ENCODE measurements at regions of chr11 and their contacts with region 1.

Region 1: DNA sequence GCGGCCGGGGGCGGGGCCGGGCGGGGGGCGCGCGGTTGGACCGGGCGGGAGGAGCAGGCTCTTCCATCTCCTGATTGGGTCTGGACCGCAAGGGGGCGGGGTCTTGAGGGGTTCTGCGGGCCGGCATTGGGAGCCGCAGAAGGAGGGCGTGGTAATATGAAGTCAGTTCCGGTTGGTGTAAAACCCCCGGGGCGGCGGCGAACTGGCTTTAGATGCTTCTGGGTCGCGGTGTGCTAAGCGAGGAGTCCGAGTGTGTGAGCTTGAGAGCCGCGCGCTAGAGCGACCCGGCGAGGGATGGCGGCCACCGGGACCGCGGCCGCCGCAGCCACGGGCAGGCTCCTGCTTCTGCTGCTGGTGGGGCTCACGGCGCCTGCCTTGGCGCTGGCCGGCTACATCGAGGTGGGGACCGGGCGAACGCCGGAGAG is at the start of gene APLP2:
- DNase-seq: peak; percentile 98 to 99
- H3K4me3 ChIP-seq: peak within 1 kb of the TSS; percentile 72 to 99
- H3K27ac ChIP-seq: peak within 1 kb of the TSS; percentile 92
- H3K4me1 ChIP-seq: peaks cover 21% of the 10 kb centered on the region
- H3K27me3 ChIP-seq: no peaks in the 10 kb centered on the region
- CTCF ChIP-seq: no peak
- POLR2A ChIP-seq: peak in 1 of 2 donors; percentile 87
- total RNA-seq, gene APLP2: 234 TPM

Region 2: DNA sequence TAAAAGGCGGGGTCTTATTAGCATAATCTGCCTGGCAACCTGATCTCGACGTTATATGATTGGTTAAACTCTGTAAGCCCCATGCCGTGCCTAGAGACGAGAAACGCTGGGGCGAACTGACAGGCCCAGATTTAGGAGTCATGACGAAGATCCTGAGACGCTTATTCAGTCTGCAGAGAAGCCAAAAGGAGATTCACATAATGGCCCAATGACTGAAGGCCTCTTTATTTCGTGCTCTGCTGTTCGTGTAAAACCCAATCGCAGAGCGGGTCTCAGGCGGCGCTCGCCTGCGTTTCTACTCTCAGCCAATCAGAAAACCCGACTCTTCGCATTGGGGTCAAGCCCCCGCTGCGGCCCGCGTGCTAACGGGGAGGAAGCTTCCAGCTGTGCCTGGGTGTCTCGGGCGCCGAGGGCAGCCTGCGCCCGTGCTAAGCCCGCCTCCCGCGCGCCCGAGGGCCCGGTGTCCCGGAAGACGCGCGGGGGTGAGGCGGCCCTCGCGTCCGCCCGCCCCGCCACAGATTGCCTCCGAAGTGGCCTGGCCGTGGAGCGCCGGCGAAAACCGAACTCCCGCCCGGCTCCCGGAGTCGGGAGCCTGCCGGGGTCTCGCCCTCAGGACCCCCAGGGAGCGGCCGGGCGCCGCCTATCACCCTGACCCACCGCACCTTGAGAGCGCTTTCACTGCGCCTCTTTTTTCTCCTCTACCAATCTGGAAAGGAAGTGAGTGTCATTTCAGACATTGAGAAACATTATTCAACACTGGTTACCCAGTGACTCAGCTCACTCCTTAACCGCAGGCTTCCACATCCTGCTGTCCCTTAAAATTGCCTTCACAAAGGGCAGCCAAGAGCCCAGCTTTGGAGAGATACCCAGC is 66.6 kb before region 1 on chr11:
- intact Hi-C with region 1: loop called (anchors 5 kb)
- DNase-seq: peak; percentile 98 to 99
- H3K4me3 ChIP-seq: peak overlapping the region; percentile 79 to 95
- H3K27ac ChIP-seq: peak overlapping the region; percentile 99
- H3K4me1 ChIP-seq: peaks cover 21% of the 10 kb centered on the region
- H3K27me3 ChIP-seq: no peaks in the 10 kb centered on the region
- CTCF ChIP-seq: no peak
- POLR2A ChIP-seq: peak; percentile 58 to 77

Region 3: GRCh38 chr11:130022798-130023583 is 46.7 kb before region 1 on chr11:
- intact Hi-C with region 1: no loop called
- DNase-seq: no peak
- H3K4me3 ChIP-seq: no peak overlapping the region
- H3K27ac ChIP-seq: no peak overlapping the region
- H3K4me1 ChIP-seq: no peaks in the 10 kb centered on the region
- H3K27me3 ChIP-seq: no peaks in the 10 kb centered on the region
- CTCF ChIP-seq: no peak
- POLR2A ChIP-seq: no peak

Region 4: GRCh38 chr11:130124096-130124495 is 54.4 kb after region 1 on chr11:
- intact Hi-C with region 1: loop called (anchors 5 kb)
- DNase-seq: no peak
- H3K4me3 ChIP-seq: no peak overlapping the region
- H3K27ac ChIP-seq: peak overlapping the region; percentile 22
- H3K4me1 ChIP-seq: peaks cover 19% of the 10 kb centered on the region
- H3K27me3 ChIP-seq: no peaks in the 10 kb centered on the region
- CTCF ChIP-seq: no peak
- POLR2A ChIP-seq: no peak

Measured in vagina (tissue), 2 donors.